WTC11 (cell line): ENCODE measurements at regions of chr6 and their contacts with region 1.

Region 1: GRCh38 chr6:5471044-5471443 is 209.7 kb downstream of the FARS2 start:
- DNase-seq: peak; percentile 72
- ATAC-seq: peak; percentile 71
- H3K4me3 Mint-ChIP-seq: no peak overlapping the region
- H3K27ac Mint-ChIP-seq: no peak overlapping the region
- H3K4me1 Mint-ChIP-seq: peaks cover 29% of the 10 kb centered on the region
- H3K27me3 Mint-ChIP-seq: no peaks in the 10 kb centered on the region
- CTCF ChIP-seq: peak; percentile 55; the same call in 1 of the 2 replicates

Region 2: GRCh38 chr6:4948781-4949450 is 522.1 kb before region 1 on chr6:
- CTCF ChIA-PET with region 1: no interaction called
- POLR2A ChIA-PET with region 1: no interaction called
- DNase-seq: no peak
- ATAC-seq: peak; percentile 25
- H3K4me3 Mint-ChIP-seq: no peak overlapping the region
- H3K27ac Mint-ChIP-seq: peak overlapping the region; percentile 83
- H3K4me1 Mint-ChIP-seq: peaks cover 40% of the 10 kb centered on the region
- H3K27me3 Mint-ChIP-seq: no peaks in the 10 kb centered on the region
- CTCF ChIP-seq: no peak

Region 3: GRCh38 chr6:5333658-5334057 is 137.4 kb before region 1 on chr6:
- CTCF ChIA-PET with region 1: no interaction called
- POLR2A ChIA-PET with region 1: no interaction called
- DNase-seq: no peak
- ATAC-seq: no peak
- H3K4me3 Mint-ChIP-seq: no peak overlapping the region
- H3K27ac Mint-ChIP-seq: no peak overlapping the region
- H3K4me1 Mint-ChIP-seq: peaks cover 3% of the 10 kb centered on the region
- H3K27me3 Mint-ChIP-seq: no peaks in the 10 kb centered on the region
- CTCF ChIP-seq: no peak

Region 4: GRCh38 chr6:5359417-5359816 is 111.6 kb before region 1 on chr6:
- CTCF ChIA-PET with region 1: no interaction called
- POLR2A ChIA-PET with region 1: no interaction called
- DNase-seq: no peak
- ATAC-seq: no peak
- H3K4me3 Mint-ChIP-seq: no peak overlapping the region
- H3K27ac Mint-ChIP-seq: no peak overlapping the region
- H3K4me1 Mint-ChIP-seq: no peaks in the 10 kb centered on the region
- H3K27me3 Mint-ChIP-seq: no peaks in the 10 kb centered on the region
- CTCF ChIP-seq: no peak

Region 5: GRCh38 chr6:5422321-5422915 is 48.6 kb before region 1 on chr6:
- CTCF ChIA-PET with region 1: interaction called, 15 read pairs
- POLR2A ChIA-PET with region 1: no interaction called
- DNase-seq: peak; percentile 56
- ATAC-seq: peak; percentile 99
- H3K4me3 Mint-ChIP-seq: no peak overlapping the region
- H3K27ac Mint-ChIP-seq: no peak overlapping the region; the same call in 1 of the 2 replicates
- H3K4me1 Mint-ChIP-seq: peaks cover 15% of the 10 kb centered on the region
- H3K27me3 Mint-ChIP-seq: no peaks in the 10 kb centered on the region
- CTCF ChIP-seq: no peak; the same call in 1 of the 2 replicates

Region 6: DNA sequence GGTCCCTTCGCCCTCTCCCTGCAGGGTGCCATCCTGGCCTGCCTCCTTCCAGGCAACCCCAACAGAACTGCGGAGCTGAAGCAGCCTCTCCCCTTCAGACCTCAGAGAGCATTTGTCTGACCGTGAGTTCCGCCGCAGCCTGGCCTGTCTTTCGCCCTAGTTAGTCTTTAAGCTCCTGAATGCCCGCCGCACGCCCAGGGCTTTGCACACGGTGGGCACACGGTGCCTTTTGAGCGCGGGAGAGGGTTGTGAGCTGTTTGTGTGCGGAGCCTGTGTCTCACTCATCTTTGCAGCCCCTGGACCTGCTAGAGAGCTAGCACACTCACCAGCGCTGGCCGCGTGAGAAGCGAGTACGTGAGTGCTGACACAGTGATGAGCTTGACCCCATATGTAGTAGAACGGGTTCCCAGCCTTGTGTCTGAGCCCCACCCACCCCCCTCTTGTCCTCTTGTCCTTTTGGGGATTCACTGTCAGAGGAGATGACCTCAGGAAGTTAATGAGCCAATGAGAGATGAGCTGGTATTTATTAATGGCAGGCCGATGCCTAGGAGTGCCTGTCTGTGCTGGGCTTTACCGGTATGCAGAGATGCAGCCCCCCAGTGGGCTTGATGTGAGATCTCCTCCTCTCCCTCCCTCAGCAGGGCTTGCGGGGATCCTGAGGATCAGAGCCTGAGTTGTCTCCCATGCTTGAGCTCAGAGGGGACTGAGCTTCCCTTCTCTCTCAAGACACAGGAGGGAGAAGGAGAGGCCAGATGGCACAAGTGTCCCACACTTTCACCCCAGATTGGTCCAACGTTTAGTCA is 39.5 kb after region 1 on chr6:
- CTCF ChIA-PET with region 1: interaction called, 25 read pairs
- POLR2A ChIA-PET with region 1: interaction called, 4 read pairs
- DNase-seq: peak; percentile 17
- ATAC-seq: peak; percentile 63
- H3K4me3 Mint-ChIP-seq: no peak overlapping the region
- H3K27ac Mint-ChIP-seq: peak overlapping the region; percentile 64
- H3K4me1 Mint-ChIP-seq: peaks cover 36% of the 10 kb centered on the region
- H3K27me3 Mint-ChIP-seq: no peaks in the 10 kb centered on the region
- CTCF ChIP-seq: no peak

Region 7: GRCh38 chr6:5582762-5583161 is 111.7 kb after region 1 on chr6:
- CTCF ChIA-PET with region 1: no interaction called
- POLR2A ChIA-PET with region 1: no interaction called
- DNase-seq: no peak
- ATAC-seq: no peak
- H3K4me3 Mint-ChIP-seq: no peak overlapping the region
- H3K27ac Mint-ChIP-seq: no peak overlapping the region
- H3K4me1 Mint-ChIP-seq: peaks cover 3% of the 10 kb centered on the region; the same call in 1 of the 2 replicates
- H3K27me3 Mint-ChIP-seq: no peaks in the 10 kb centered on the region
- CTCF ChIP-seq: no peak

Region 8: GRCh38 chr6:5729080-5729434 is 258.0 kb after region 1 on chr6:
- CTCF ChIA-PET with region 1: interaction called, 16 read pairs
- POLR2A ChIA-PET with region 1: no interaction called
- DNase-seq: no peak
- ATAC-seq: peak; percentile 19; the same call in 1 of the 2 replicates
- H3K4me3 Mint-ChIP-seq: no peak overlapping the region
- H3K27ac Mint-ChIP-seq: peak overlapping the region; percentile 38; the same call in 1 of the 2 replicates
- H3K4me1 Mint-ChIP-seq: peaks cover 31% of the 10 kb centered on the region
- H3K27me3 Mint-ChIP-seq: no peaks in the 10 kb centered on the region
- CTCF ChIP-seq: no peak

Region 9: DNA sequence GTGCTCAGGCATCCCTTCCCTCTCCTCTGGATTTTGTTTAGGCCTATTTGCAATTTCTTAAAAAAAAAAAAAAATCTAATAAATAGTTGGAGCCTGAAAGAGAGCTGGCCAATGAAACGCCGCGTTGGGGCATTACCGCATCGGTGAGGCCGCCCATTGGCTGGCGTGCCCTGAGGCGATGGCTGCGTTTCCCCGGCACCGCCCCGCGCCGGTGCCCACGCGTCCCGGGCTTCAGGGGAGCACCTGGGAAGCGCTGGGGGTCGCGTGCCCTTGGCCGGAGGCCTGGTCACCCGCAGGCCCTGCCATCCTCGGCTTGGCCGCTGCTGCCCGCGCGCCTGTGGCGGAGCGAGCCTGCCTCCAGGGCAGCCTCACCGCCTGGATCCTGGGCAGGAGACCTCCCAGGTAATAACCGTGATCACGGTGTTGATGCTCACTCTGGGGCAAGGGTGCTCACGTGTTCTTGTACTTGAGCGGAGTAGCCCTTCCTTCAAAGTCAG is 380.3 kb after region 1 on chr6:
- CTCF ChIA-PET with region 1: interaction called, 10 read pairs
- POLR2A ChIA-PET with region 1: no interaction called
- DNase-seq: peak; percentile 80
- ATAC-seq: peak; percentile 84
- H3K4me3 Mint-ChIP-seq: peak overlapping the region; percentile 64
- H3K27ac Mint-ChIP-seq: no peak overlapping the region
- H3K4me1 Mint-ChIP-seq: peaks cover 28% of the 10 kb centered on the region
- H3K27me3 Mint-ChIP-seq: peaks cover 94% of the 10 kb centered on the region
- CTCF ChIP-seq: no peak